ENCODE measurements at regions of chr1 and their contacts with region 1.

Region 1: DNA sequence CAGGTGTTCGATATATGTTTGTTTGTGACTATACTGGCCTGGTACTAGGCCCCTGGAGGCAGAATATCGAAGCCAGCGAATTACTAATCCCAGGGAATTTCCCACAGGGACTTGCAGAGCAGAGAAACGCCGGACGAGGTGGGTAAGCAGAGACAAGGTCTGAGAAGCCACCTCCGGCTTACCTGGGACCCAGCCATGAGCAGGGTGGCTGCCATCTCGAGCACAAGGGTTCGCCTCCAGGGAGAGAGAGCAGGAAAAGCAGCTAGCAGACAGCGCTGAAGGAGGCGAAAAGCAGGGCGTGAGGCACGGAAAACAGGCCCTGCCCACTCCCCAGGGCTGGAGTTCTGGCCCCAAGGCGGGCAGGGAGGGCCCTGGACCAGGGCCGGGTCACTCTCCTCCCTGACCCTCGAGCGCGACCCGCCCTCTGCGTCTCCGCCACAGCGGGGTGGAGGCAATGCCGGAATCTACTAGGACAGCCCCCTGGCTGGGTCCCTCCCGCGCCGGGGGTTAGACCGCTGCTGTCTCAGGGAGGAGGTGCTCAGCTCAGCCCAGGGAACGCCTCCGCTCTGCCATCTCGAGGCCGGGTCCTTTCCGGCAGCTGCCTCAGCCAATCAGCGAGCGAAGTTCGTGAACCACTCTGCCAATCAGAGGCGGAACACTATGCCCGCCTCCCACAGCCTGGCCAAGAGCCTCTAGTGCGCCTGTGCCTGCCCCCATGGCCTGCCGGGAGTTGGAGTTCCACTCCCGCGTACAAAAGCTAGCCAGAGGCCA is 1.7 kb downstream of the ZNF436 start:
- DNase-seq: peak; percentile 99
- ATAC-seq: peak; percentile 89
- H3K4me3 ChIP-seq: peak overlapping the region; percentile 67
- H3K27ac ChIP-seq: peak overlapping the region; percentile 95
- H3K4me1 ChIP-seq: peaks cover 15% of the 10 kb centered on the region
- H3K27me3 ChIP-seq: no peaks in the 10 kb centered on the region
- CTCF ChIP-seq: no peak
- POLR2A ChIP-seq: peak; percentile 54
- RAD21 ChIP-seq: no peak

Region 2: DNA sequence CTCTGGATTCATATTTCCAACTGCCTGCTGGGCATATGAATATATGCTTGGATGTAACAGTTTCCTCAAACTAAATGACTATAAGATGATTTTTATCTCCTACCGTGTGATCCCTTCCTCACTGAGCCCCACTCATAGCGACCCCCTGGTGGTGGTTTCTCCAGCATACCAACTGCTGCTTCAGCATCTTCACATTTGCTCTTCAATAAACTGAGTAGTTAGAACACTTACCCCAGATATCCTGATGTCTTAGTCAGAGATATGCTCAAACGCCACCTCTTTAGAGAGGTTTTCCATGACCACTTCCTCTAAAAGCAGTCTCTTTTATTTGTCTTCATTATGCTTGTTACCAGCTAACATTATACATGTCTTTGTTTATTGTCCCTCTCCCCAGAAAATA is 13.7 kb before region 1 on chr1:
- CTCF ChIA-PET with region 1: no interaction called
- POLR2A ChIA-PET with region 1: interaction called, 11 read pairs
- dilution Hi-C with region 1: no loop called
- in situ Hi-C with region 1: no loop called
- intact Hi-C with region 1: no loop called
- DNase-seq: no peak
- ATAC-seq: no peak
- H3K4me3 ChIP-seq: no peak overlapping the region
- H3K27ac ChIP-seq: no peak overlapping the region
- H3K4me1 ChIP-seq: no peaks in the 10 kb centered on the region
- H3K27me3 ChIP-seq: no peaks in the 10 kb centered on the region
- CTCF ChIP-seq: no peak
- POLR2A ChIP-seq: no peak
- RAD21 ChIP-seq: no peak

Region 3: DNA sequence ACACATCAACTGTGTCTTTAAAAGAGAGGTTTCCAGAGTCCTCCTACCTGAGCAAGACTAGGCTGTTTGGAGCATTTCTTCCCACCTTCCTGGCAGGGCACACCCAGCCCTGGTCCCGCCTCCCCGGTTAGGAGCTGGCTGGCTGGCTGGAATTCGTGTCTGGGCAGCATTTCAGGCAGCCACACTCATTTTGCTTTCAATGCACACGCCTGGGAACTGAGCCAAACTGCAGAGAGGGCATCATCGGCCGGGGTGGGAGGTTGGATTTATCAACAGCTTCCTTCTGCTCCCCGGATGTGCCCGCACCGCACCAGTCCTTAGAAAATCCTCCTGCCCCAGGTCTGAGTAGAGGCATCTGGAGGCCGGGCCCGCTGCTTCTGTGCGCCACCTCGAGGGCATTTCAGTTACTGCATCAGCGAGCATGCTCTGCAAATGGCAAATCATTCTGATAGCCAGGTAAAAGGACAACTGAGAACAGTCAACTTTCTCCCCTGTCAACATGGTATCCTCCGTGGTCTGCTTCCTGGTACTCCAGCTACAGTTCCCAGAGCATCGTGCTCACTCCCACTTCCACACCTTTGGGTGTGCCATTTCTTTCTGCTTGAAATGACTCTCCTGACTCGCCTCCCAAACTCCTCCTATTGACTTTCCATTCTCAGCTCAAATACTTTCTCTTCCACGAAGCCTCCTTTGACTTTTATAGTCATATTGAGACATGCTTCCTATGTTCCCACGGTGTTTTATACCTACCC is 35.9 kb after region 1 on chr1:
- CTCF ChIA-PET with region 1: interaction called, 8 read pairs
- POLR2A ChIA-PET with region 1: interaction called, 4 read pairs
- dilution Hi-C with region 1: no loop called
- in situ Hi-C with region 1: no loop called
- intact Hi-C with region 1: loop called (anchors 1 kb)
- DNase-seq: peak; percentile 89
- ATAC-seq: peak; percentile 89
- H3K4me3 ChIP-seq: no peak overlapping the region
- H3K27ac ChIP-seq: peak overlapping the region; percentile 23
- H3K4me1 ChIP-seq: peaks cover 21% of the 10 kb centered on the region
- H3K27me3 ChIP-seq: no peaks in the 10 kb centered on the region
- CTCF ChIP-seq: peak; percentile 89
- POLR2A ChIP-seq: no peak
- RAD21 ChIP-seq: peak; percentile 93

Measured in IMR-90 (cell line).